ENCODE measurements at regions of chr2 and their contacts with region 1.

Region 1: DNA sequence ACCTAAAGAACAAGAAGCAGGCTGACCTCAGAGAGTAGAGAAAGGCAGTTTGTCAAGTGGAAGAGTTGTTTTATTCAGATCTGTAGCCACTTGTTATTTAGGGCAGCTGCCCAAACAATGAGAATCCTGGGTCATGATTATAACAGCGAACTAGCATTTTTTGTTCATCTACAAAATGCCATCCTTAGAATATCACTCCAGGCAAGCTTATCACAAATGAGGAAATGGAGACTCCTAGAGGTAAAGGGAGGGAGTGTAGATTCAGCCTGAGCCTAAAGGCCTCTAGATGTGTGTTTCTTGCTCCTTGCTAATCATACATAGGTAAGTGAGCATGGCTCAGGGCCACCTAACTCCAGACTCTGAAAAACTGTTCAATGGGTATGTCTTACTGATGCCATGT is 126.1 kb downstream of the HNMT start:
- DNase-seq: peak; percentile 22
- ATAC-seq: peak; percentile 92
- H3K4me3 ChIP-seq: no peak overlapping the region
- H3K27ac ChIP-seq: no peak overlapping the region
- H3K4me1 ChIP-seq: no peaks in the 10 kb centered on the region
- H3K27me3 ChIP-seq: no peaks in the 10 kb centered on the region
- CTCF ChIP-seq: peak; percentile 54 to 64 (median 61); a peak in 4 of 6 replicates
- POLR2A ChIP-seq: no peak
- RAD21 ChIP-seq: peak; percentile 76

Region 2: GRCh38 chr2:137813176-137813575 is 277.2 kb before region 1 on chr2:
- CTCF ChIA-PET with region 1: no interaction called
- POLR2A ChIA-PET with region 1: no interaction called
- RAD21 ChIA-PET with region 1: no interaction called
- intact Hi-C with region 1: no loop called
- DNase-seq: no peak
- ATAC-seq: no peak
- H3K4me3 ChIP-seq: no peak overlapping the region
- H3K27ac ChIP-seq: no peak overlapping the region
- H3K4me1 ChIP-seq: no peaks in the 10 kb centered on the region
- H3K27me3 ChIP-seq: peaks cover 34% of the 10 kb centered on the region
- CTCF ChIP-seq: no peak
- POLR2A ChIP-seq: no peak
- RAD21 ChIP-seq: no peak

Region 3: GRCh38 chr2:137910641-137911040 is 179.7 kb before region 1 on chr2:
- CTCF ChIA-PET with region 1: interaction called, 18 read pairs
- POLR2A ChIA-PET with region 1: no interaction called
- RAD21 ChIA-PET with region 1: no interaction called
- intact Hi-C with region 1: loop called (anchors 10 kb)
- DNase-seq: peak; percentile 8
- ATAC-seq: no peak
- H3K4me3 ChIP-seq: no peak overlapping the region
- H3K27ac ChIP-seq: no peak overlapping the region
- H3K4me1 ChIP-seq: no peaks in the 10 kb centered on the region
- H3K27me3 ChIP-seq: no peaks in the 10 kb centered on the region
- CTCF ChIP-seq: peak; percentile 34 to 73 (median 67); a peak in 4 of 6 replicates
- POLR2A ChIP-seq: no peak
- RAD21 ChIP-seq: peak; percentile 78

Region 4: GRCh38 chr2:138112536-138112935 is 22.2 kb after region 1 on chr2:
- CTCF ChIA-PET with region 1: no interaction called
- POLR2A ChIA-PET with region 1: no interaction called
- RAD21 ChIA-PET with region 1: no interaction called
- intact Hi-C with region 1: no loop called
- DNase-seq: no peak
- ATAC-seq: no peak
- H3K4me3 ChIP-seq: no peak overlapping the region
- H3K27ac ChIP-seq: no peak overlapping the region
- H3K4me1 ChIP-seq: peaks cover 0 to 3% of the 10 kb centered on the region in 2 experiments; a peak in 2 of 4 replicates
- H3K27me3 ChIP-seq: no peaks in the 10 kb centered on the region
- CTCF ChIP-seq: no peak
- POLR2A ChIP-seq: no peak
- RAD21 ChIP-seq: no peak

Region 5: GRCh38 chr2:138324068-138324771 is 233.9 kb after region 1 on chr2:
- CTCF ChIA-PET with region 1: no interaction called
- POLR2A ChIA-PET with region 1: no interaction called
- RAD21 ChIA-PET with region 1: no interaction called
- intact Hi-C with region 1: no loop called
- DNase-seq: no peak
- ATAC-seq: peak; percentile 57; the same call in 1 of the 2 replicates
- H3K4me3 ChIP-seq: no peak overlapping the region
- H3K27ac ChIP-seq: no peak overlapping the region
- H3K4me1 ChIP-seq: no peaks in the 10 kb centered on the region
- H3K27me3 ChIP-seq: no peaks in the 10 kb centered on the region
- CTCF ChIP-seq: peak in 1 of 3 experiments; percentile 21; a peak in 1 of 6 replicates
- POLR2A ChIP-seq: no peak
- RAD21 ChIP-seq: peak; percentile 32; the same call in 1 of the 2 replicates

Region 6: GRCh38 chr2:138615257-138615656 is 524.9 kb after region 1 on chr2:
- CTCF ChIA-PET with region 1: no interaction called
- POLR2A ChIA-PET with region 1: no interaction called
- RAD21 ChIA-PET with region 1: no interaction called
- intact Hi-C with region 1: no loop called
- DNase-seq: no peak
- ATAC-seq: peak; percentile 34; the same call in 1 of the 2 replicates
- H3K4me3 ChIP-seq: no peak overlapping the region
- H3K27ac ChIP-seq: no peak overlapping the region
- H3K4me1 ChIP-seq: peaks cover 0 to 4% of the 10 kb centered on the region in 2 experiments; a peak in 1 of 4 replicates
- H3K27me3 ChIP-seq: no peaks in the 10 kb centered on the region
- CTCF ChIP-seq: no peak
- POLR2A ChIP-seq: no peak
- RAD21 ChIP-seq: no peak